Cardiac septum (tissue), 1 donor: ENCODE measurements at regions of chr9 and their contacts with region 1.

Region 1: GRCh38 chr9:91422758-91423711 is 597 bp downstream of the NFIL3 start:
- DNase-seq: no peak

Region 2: GRCh38 chr9:91036826-91037510 is 386.1 kb before region 1 on chr9:
- intact Hi-C with region 1: loop called (anchors 5 kb)
- DNase-seq: peak; percentile 87

Region 3: GRCh38 chr9:91117959-91118703 is 304.9 kb before region 1 on chr9:
- intact Hi-C with region 1: loop called (anchors 2 kb)
- DNase-seq: peak; percentile 92

Region 4: GRCh38 chr9:91301161-91301560 is 121.9 kb before region 1 on chr9:
- intact Hi-C with region 1: loop called (anchors 10 kb)
- DNase-seq: no peak

Region 5: GRCh38 chr9:91483189-91483691 is 60.2 kb after region 1 on chr9:
- intact Hi-C with region 1: loop called (anchors 5 kb)
- DNase-seq: no peak

Region 6: DNA sequence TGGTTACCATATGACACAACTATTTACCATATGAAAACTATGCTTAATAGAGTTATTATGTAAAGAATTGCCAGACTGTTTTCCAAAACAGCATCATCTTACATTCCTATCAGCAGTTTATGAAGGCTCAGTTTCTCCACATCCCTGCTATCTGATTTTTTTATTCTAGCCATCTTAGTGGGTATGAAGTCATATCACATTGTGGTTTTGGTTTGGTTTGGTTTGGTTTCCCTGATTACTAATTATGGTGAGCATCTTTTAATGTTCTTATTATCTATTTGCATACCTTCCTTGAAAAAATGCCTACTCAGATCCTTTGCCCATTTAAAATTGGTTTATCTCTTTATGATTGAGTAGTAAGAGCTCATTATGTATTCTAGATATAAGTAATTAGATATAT is 200.0 kb after region 1 on chr9:
- intact Hi-C with region 1: no loop called
- DNase-seq: no peak